ENCODE measurements at regions of chr10 and their contacts with region 1.

Region 1: GRCh38 chr10:77179015-77179695 is 458.5 kb downstream of the KCNMA1 start:
- DNase-seq: peak; percentile 51
- H3K4me3 ChIP-seq: no peak overlapping the region
- H3K27ac ChIP-seq: peak overlapping the region in 1 of 2 donors; percentile 50
- H3K4me1 ChIP-seq: no peaks in the 10 kb centered on the region
- H3K27me3 ChIP-seq: no peaks in the 10 kb centered on the region
- CTCF ChIP-seq: no peak
- POLR2A ChIP-seq: no peak

Region 2: DNA sequence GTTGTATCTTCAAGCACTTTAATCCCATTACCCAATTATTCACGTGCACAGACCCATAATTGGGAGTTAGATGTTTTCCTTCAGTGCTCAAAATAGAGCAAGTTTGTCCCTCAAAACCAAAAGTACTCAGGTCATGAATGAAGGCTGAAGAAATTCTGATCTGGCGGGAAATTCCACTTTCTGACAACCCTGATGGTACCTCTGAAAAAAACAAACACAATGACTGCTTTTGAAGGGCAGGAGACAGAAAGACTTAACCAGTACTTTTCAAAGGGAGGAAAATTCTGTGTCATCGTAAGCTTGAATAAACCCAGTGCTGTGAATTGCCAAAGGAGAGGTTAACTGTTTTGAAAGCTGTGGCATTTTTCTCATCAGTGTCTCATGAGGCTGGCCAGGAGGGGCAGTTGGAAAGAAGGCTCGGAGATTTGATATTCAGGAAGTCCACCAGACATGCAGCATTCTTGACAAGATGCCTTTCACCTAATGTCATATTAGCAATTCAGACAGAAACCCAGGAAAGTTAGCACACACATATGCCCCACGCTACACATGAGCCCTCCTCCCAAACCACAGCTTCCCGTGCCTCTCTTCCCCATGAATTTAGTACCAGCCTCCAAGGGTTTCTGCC is 111.5 kb after region 1 on chr10:
- intact Hi-C with region 1: loop called (anchors 5 kb)
- DNase-seq: no peak
- H3K4me3 ChIP-seq: no peak overlapping the region
- H3K27ac ChIP-seq: no peak overlapping the region
- H3K4me1 ChIP-seq: peaks cover 8% of the 10 kb centered on the region
- H3K27me3 ChIP-seq: no peaks in the 10 kb centered on the region
- CTCF ChIP-seq: no peak
- POLR2A ChIP-seq: no peak

Region 3: GRCh38 chr10:77371848-77372799 is 193.0 kb after region 1 on chr10:
- intact Hi-C with region 1: loop called (anchors 5 kb)
- DNase-seq: peak; percentile 51
- H3K4me3 ChIP-seq: no peak overlapping the region
- H3K27ac ChIP-seq: peak overlapping the region; percentile 10 to 68
- H3K4me1 ChIP-seq: no peaks in the 10 kb centered on the region
- H3K27me3 ChIP-seq: no peaks in the 10 kb centered on the region
- CTCF ChIP-seq: no peak
- POLR2A ChIP-seq: no peak

Region 4: GRCh38 chr10:77391605-77392235 is 212.6 kb after region 1 on chr10:
- intact Hi-C with region 1: loop called (anchors 5 kb)
- DNase-seq: peak; percentile 61
- H3K4me3 ChIP-seq: no peak overlapping the region
- H3K27ac ChIP-seq: peak overlapping the region; percentile 54 to 58
- H3K4me1 ChIP-seq: no peaks in the 10 kb centered on the region
- H3K27me3 ChIP-seq: no peaks in the 10 kb centered on the region
- CTCF ChIP-seq: peak; percentile 50 to 72 (median 65)
- POLR2A ChIP-seq: no peak

Region 5: DNA sequence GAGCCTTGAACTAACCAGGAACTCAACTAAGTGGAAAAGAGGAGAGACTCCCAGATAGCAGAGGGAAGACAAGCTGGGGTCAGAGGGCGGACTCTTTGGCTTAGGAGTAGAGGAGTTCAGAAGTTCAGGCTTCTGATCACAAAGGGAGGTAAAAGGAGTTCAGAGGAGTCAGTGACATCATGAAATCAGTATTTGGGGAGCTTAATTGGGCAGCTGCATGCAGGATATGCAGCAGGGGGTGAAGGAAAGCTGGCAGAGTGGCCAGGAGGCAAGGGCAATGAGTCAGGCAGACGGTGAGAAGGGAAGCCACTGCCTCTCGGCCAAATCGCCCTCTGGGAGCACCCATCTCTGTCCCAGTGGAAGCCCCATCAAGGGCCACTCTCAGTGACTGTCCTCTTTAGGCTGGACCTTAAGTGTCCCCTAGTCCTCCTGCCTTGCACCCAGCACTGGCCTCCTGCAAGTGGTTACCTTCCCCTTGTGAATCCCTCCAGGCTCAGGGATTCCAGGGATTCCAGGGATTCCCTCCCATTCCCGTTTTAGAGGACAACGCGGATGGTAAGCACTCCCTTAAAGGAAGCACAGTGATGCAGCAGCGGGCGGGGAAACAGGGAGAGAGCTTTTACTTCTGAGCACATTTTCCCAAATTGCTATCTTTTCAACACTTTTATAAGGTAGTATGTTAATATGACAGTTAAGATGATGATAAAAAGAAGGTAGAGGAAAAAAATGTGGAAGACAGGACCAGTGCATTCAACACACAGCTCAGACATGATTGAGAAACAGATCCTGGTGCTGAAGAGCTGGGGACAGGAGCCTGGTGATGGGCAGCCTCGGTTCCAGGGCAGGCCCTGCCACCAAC is 385.8 kb after region 1 on chr10:
- intact Hi-C with region 1: no loop called
- DNase-seq: no peak
- H3K4me3 ChIP-seq: no peak overlapping the region
- H3K27ac ChIP-seq: no peak overlapping the region
- H3K4me1 ChIP-seq: no peaks in the 10 kb centered on the region
- H3K27me3 ChIP-seq: no peaks in the 10 kb centered on the region
- CTCF ChIP-seq: no peak
- POLR2A ChIP-seq: no peak